Transverse colon (tissue), 4 donors: ENCODE measurements at regions of chr1 and their contacts with region 1.

Region 1: GRCh38 chr1:180851995-180852887 is 60.5 kb upstream of the KIAA1614 start:
- DNase-seq: no peak
- H3K4me3 ChIP-seq: no peak overlapping the region
- H3K27ac ChIP-seq: no peak overlapping the region
- H3K4me1 ChIP-seq: no peaks in the 10 kb centered on the region
- H3K27me3 ChIP-seq: no peaks in the 10 kb centered on the region
- CTCF ChIP-seq: no peak
- EP300 ChIP-seq: no peak
- POLR2A ChIP-seq: no peak

Region 2: DNA sequence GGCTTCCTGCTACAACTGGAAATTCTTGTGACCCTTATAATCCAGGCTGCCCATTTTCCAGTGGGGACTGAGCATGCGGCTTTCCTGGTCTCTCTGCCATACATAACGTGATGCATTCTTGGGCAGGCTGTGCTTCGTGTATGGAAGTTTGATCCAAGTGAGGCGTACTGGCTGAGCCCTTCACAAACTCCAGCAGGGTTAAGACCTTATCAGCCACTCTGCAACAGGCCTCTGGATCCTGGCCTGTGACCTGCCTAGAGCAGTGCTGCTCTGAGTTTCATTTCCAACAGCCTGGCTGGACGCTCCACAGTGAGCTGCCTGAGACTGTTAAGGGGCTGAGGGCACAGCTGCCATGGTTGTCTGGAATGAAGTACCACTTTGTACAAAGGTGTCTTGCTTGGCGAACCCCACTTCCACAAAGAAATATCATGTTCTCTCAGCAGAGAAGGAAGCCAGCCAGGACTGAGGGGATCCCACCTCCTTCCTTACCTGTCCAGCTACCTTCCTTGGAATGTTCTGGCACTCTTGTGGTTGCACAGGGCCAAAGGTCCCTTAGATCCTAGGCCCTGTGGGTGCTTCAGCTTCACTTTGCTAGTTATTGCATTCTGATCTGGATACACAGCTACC is 248.9 kb before region 1 on chr1:
- in situ Hi-C with region 1: no loop called
- intact Hi-C with region 1: no loop called
- DNase-seq: no peak
- H3K4me3 ChIP-seq: no peak overlapping the region
- H3K27ac ChIP-seq: no peak overlapping the region
- H3K4me1 ChIP-seq: peaks cover 0 to 8% (median 0%) of the 10 kb centered on the region in 4 donors
- H3K27me3 ChIP-seq: no peaks in the 10 kb centered on the region
- CTCF ChIP-seq: no peak
- EP300 ChIP-seq: no peak
- POLR2A ChIP-seq: no peak

Region 3: GRCh38 chr1:180623579-180624347 is 228.5 kb before region 1 on chr1:
- in situ Hi-C with region 1: loop called in 3 of 4 experiments (anchors 10 to 25 kb)
- intact Hi-C with region 1: no loop called
- DNase-seq: no peak
- H3K4me3 ChIP-seq: no peak overlapping the region
- H3K27ac ChIP-seq: no peak overlapping the region
- H3K4me1 ChIP-seq: no peaks in the 10 kb centered on the region
- H3K27me3 ChIP-seq: no peaks in the 10 kb centered on the region
- CTCF ChIP-seq: no peak
- EP300 ChIP-seq: no peak
- POLR2A ChIP-seq: no peak

Region 4: GRCh38 chr1:181936269-181936668 is 1084.0 kb after region 1 on chr1:
- in situ Hi-C with region 1: no loop called
- intact Hi-C with region 1: no loop called
- DNase-seq: no peak
- H3K4me3 ChIP-seq: no peak overlapping the region
- H3K27ac ChIP-seq: no peak overlapping the region
- H3K4me1 ChIP-seq: no peaks in the 10 kb centered on the region
- H3K27me3 ChIP-seq: no peaks in the 10 kb centered on the region
- CTCF ChIP-seq: no peak
- EP300 ChIP-seq: no peak
- POLR2A ChIP-seq: no peak